ENCODE measurements at regions of chr20 and their contacts with region 1.

Region 1: DNA sequence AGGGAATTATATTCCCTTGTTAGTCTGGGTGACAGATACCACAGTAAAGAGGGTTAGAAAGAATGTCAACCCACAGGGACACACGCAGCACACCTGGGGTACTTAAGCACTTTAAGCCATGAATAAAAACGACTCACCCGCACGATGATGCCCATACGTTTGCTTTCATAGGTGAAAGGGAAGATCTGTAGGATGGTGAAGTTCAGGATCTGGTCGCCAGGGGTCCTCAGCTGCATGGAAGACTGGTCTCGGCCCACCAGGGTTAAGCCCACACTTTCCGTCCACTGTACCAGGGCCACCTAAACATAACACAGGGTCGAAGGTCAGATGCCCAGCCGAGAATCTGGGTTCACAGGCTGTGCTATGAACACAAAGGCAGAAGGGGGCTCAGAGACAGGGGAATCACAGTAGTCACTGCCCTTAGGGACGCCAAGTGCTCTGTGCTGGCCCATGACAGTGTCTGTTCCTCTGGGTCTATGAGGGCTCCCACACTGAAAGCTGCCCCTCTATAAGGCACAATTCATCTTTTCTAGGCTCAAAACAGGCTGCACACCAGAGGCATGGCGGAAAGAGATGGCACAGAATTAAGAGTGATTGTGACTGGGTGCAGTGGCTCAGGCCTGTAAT is 96.8 kb upstream of the NFATC2 start:
- DNase-seq: peak; percentile 78

Region 2: DNA sequence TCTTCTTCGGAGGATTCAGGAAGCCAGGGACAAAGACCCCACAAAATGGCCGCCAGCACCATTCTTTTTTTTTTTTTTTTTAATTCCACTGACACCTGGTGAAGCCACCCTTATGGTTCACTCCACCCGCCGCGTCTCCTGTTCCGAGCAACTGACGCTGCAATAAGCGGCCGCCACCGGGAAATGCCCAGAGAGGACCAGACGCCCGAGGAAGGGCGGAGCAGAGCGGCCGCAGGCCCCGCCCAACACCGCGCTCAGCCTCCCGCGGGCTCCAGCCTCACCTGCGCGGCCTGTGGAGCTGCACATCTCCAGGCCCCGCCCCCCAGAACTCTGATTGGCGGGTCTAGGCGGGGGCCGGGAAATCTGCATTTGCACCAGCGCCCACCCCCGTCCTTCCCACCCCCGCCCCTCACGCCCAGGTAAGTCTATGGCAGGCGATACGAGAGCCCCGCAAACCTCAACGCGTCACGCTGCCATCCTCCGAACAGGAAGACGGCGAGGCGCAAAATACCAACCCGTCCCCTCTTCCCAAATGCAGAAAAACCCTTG is 127.8 kb after region 1 on chr20:
- intact Hi-C with region 1: loop called (anchors 10 kb)
- DNase-seq: peak; percentile 93

Region 3: GRCh38 chr20:51984931-51985415 is 345.7 kb after region 1 on chr20:
- intact Hi-C with region 1: loop called (anchors 10 kb)
- DNase-seq: no peak

Region 4: GRCh38 chr20:52083627-52084232 is 444.4 kb after region 1 on chr20:
- intact Hi-C with region 1: loop called (anchors 2 kb)
- DNase-seq: no peak

Measured in cardiac septum (tissue), 1 donor.